Astrocyte of the cerebellum (primary cell): ENCODE measurements at regions of chr14 and their contacts with region 1.

Region 1: DNA sequence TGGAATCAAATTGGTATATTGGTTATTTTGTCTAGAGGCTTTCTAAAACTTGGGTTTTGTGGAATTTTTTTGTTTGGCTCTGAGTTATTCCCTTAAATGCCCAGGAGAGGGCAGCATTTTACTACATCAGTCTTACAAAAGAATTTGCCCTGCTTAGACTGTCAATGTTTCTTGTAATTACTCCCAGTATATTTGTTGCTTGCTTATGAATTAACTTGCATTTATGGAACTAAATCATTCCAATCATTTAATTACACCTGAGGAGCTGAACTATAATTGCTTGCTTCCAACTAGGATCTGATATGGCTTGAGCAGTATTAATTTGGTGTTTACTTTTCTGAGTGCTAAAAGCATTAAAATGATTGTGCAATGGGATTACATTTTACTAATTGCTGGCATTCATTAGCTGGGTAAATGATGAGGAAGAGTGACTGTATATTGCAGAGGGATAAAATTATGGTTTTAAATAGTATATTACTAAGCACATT is 48.7 kb downstream of the MIPOL1 start:
- DNase-seq: peak; percentile 53
- H3K4me3 ChIP-seq: no peak overlapping the region
- CTCF ChIP-seq: peak; percentile 55

Region 2: GRCh38 chr14:37595693-37596637 is 349.5 kb after region 1 on chr14:
- in situ Hi-C with region 1: loop called (anchors 5 kb)
- DNase-seq: no peak
- H3K4me3 ChIP-seq: peak overlapping the region; percentile 41
- CTCF ChIP-seq: no peak